ENCODE measurements at regions of chr9 and their contacts with region 1.

Region 1: DNA sequence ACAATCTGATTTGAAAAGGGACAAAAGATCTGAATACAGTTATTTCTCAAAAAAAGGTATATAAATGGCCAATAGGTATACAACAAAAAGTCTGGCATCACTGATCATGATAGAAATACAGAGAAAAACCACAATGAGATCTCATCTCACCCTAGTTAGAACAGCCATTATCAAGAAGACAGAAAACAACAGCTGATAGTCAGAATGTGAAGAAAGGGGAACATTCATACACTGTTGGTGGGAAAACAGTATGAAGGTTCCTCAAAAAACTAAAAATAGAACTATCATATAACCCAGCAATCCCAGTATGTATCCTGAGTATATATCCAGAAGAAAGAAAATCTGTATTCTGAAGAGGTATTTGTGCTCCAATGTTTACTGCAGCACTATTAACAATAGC is 75.7 kb upstream of the OR2K2 start:
- DNase-seq: no peak
- H3K4me3 ChIP-seq: no peak overlapping the region
- H3K27ac ChIP-seq: peak overlapping the region in 16 of 59 donors; percentile 2 to 67 (median 27)
- H3K27me3 ChIP-seq: no peaks in the 10 kb centered on the region
- CTCF ChIP-seq: no peak

Region 2: DNA sequence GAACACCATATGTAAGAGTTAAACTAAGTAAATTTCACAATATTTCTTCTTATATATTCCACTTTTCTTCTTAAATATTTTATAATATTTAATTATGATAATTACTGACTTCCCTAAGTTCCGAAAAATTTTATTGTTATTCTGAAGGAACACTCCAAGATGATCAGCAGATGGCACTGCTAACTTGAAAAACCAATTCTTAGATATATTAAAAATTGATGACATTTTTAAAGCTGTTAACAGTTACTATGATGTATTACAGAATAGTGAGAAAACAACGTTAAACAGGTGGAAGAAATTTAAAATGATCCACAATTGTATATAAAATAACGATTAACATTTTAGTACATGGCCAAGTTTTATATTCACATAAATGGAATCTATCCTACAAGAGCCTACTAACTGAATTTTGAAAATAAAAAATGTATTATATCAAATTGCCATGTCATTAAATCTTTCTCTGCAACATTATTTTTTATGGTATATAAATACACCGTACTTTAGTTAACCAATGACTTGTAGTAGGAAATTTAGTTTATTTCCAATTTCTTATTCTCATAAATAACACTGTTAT is 767.2 kb before region 1 on chr9:
- intact Hi-C with region 1: loop called in 1 of 2 experiments (anchors 5 kb)
- DNase-seq: no peak
- H3K4me3 ChIP-seq: no peak overlapping the region
- H3K27ac ChIP-seq: peak overlapping the region in 4 of 59 donors; percentile 5 to 37 (median 13)
- H3K27me3 ChIP-seq: no peaks in the 10 kb centered on the region
- CTCF ChIP-seq: peak; percentile 37 to 87 (median 64)

Region 3: DNA sequence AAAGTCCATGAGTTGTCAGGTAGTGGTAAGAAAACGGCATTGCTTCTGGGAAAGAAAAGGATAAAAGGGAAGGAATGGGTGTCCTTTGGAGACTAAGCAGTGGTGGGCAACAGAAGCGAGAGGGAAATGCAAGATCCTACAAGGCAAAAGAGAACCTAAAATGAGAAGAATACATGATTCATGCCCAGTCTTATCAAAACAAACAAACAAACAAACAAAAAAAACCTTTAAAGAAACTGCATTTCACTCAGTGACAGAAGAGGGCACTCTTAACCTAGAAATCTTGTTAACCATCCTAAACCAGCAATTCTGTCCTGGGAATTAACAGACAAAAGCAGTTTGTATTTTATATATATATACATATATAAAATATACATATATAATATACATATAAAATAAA is 680.9 kb after region 1 on chr9:
- intact Hi-C with region 1: no loop called
- DNase-seq: no peak
- H3K4me3 ChIP-seq: peak overlapping the region in 2 of 59 donors; percentile 4 to 7
- H3K27ac ChIP-seq: no peak overlapping the region
- H3K27me3 ChIP-seq: no peaks in the 10 kb centered on the region
- CTCF ChIP-seq: peak; percentile 29 to 89 (median 71)